ENCODE measurements at regions of chr19 and their contacts with region 1.

Region 1: GRCh38 chr19:58400916-58401839 is 5.7 kb downstream of the RNF225 start:
- DNase-seq: peak; percentile 98 to 100
- ATAC-seq: peak; percentile 94 to 98 (median 96)
- H3K4me3 ChIP-seq: peak overlapping the region; percentile 76
- H3K4me3 Mint-ChIP-seq: peak overlapping the region; percentile 92
- H3K27ac ChIP-seq: peak overlapping the region; percentile 98
- H3K27ac Mint-ChIP-seq: peak overlapping the region; percentile 92 to 93
- H3K4me1 ChIP-seq: peaks cover 18% of the 10 kb centered on the region
- H3K4me1 Mint-ChIP-seq: peaks cover 14 to 15% of the 10 kb centered on the region in 2 donors
- H3K27me3 ChIP-seq: peaks cover 10% of the 10 kb centered on the region
- H3K27me3 Mint-ChIP-seq: peaks cover 0 to 19% of the 10 kb centered on the region in 2 donors
- CTCF ChIP-seq: no peak

Region 2: DNA sequence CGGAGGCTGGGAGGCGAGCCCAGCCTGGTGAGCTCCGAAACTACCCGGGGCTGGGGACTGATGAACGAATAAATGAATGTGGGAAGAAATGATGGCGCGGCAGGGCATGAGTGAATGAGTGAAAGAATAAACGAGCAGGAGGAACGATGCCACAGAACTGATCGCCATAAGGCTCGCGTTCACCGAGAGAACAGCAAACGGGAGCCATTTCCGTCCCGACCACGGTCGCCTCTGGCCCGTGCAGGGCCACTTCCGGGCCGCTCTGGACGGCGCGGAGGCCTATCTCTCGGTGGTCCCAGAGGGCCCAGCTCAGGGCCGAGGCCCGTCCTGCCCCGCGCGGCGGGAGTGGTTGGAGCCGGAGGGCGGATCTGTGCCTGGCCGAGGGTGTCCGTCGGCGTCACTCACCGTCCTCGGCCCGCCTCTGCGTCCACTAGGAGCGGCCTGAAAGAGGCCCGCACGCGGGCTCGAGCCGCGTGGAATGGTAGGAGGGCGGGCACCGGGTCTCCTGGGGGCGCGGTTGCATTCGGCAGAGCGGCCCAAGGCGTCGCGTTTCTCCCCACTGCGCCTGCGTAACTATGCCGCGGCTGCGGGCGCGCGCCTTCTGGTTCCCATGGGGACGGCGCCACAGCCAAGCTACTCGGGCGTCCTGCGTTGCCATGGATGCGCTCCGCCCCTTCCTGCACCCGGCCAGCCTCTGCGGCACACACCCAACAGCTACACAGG is 38.7 kb before region 1 on chr19 and contains the start of gene ZNF497:
- intact Hi-C with region 1: loop called (anchors 1 kb)
- DNase-seq: peak; percentile 96 to 99
- ATAC-seq: peak; percentile 82 to 92 (median 86)
- H3K4me3 ChIP-seq: peak within 1 kb of the TSS; percentile 59
- H3K4me3 Mint-ChIP-seq: peak within 1 kb of the TSS; percentile 97
- H3K27ac ChIP-seq: peak within 1 kb of the TSS; percentile 84
- H3K27ac Mint-ChIP-seq: peak within 1 kb of the TSS; percentile 91 to 95
- H3K4me1 ChIP-seq: peaks cover 18% of the 10 kb centered on the region
- H3K4me1 Mint-ChIP-seq: peaks cover 13 to 20% of the 10 kb centered on the region in 2 donors
- H3K27me3 ChIP-seq: no peaks in the 10 kb centered on the region
- H3K27me3 Mint-ChIP-seq: no peaks in the 10 kb centered on the region
- CTCF ChIP-seq: no peak
- total RNA-seq, gene ZNF497: 0.40 to 0.61 (median 0.60) TPM

Region 3: DNA sequence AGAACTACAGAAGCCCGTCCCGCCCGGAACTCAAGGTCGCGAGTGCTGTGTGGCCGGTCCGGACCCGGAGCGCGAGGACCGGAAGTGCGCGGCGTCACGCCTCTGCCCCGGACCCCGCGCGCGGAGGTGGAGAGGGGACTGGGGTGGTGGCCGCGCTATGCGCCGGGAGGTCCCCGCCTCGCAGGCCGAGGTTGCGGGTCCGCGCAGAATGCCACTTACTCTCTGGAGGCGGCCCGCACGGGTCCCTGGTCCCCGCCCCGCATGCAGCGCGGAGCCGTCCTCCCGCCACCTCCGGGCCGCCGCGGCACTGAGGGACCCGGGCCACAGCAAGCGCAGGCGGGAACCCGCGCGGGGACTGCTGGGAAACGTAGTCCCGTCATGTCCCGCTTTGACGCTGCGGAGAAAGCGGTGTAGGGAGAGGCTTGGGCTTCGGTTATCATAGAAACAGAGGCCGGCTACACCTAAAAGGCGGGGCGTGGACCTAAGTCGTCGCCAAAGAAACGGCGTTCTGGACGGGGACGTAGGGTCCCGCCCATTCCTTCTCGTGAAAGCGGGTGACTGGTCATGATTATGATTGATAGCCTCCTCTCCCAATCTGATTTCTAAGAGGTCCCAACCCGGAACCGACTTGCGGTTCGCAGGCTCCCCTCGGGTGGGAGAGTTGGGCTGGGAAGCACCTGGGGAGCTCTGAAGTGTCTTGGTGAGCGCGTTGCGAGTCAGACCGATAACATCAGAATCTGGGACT is 20.3 kb before region 1 on chr19 and contains the start of gene ZNF837:
- intact Hi-C with region 1: loop called (anchors 1 kb)
- DNase-seq: peak; percentile 95 to 100
- ATAC-seq: peak; percentile 85 to 94 (median 86)
- H3K4me3 ChIP-seq: peak within 1 kb of the TSS; percentile 50
- H3K4me3 Mint-ChIP-seq: peak within 1 kb of the TSS; percentile 89
- H3K27ac ChIP-seq: peak within 1 kb of the TSS; percentile 92
- H3K27ac Mint-ChIP-seq: peak within 1 kb of the TSS; percentile 93 to 94
- H3K4me1 ChIP-seq: peaks cover 37% of the 10 kb centered on the region
- H3K4me1 Mint-ChIP-seq: peaks cover 13 to 29% of the 10 kb centered on the region in 2 donors
- H3K27me3 ChIP-seq: no peaks in the 10 kb centered on the region
- H3K27me3 Mint-ChIP-seq: no peaks in the 10 kb centered on the region
- CTCF ChIP-seq: no peak
- total RNA-seq, gene ZNF837: 0.63 to 1.4 (median 1.3) TPM

Region 4: DNA sequence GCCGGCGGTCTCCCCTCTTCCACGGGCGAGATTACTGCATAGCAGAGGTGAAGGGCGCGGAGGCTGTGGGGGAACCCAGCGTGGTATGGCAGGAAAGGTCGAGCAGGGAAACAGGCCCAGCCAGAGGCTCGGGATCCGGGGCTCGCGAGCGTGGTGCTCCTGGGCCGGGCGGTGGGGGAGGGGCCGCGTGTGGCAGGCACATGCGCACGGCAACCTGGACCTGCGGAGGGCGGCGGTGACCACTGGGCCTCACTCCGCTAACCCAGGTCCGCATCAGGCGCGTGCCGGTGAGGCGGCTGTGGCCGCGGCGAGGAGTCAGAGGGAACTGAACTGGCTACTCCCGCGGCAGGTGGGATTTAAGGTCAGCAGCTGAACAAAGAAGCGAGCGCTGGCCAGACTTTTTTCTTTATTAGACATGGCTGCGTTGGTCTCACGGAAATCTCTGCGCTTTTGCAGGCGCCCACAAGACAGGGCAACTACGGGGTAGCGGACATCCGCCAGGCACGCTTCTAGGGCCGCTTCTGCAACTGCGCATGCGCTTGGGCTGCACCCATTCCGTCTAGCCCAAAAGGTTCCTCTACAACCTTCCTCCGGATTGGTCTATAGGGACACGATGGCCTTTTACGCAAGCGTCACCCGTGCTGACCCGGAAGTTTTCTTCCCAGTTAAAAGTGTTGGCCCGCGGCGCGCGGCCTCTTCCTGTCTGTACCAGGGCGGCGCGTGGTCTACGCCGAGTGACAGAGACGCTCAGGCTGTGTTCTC is 14.4 kb before region 1 on chr19 and contains the start of gene RPS5:
- intact Hi-C with region 1: loop called (anchors 1 kb)
- DNase-seq: peak; percentile 89 to 100
- ATAC-seq: peak; percentile 85 to 96 (median 90)
- H3K4me3 ChIP-seq: peak within 1 kb of the TSS; percentile 55
- H3K4me3 Mint-ChIP-seq: peak within 1 kb of the TSS; percentile 97
- H3K27ac ChIP-seq: peak within 1 kb of the TSS; percentile 96
- H3K27ac Mint-ChIP-seq: peak within 1 kb of the TSS; percentile 98
- H3K4me1 ChIP-seq: peaks cover 36% of the 10 kb centered on the region
- H3K4me1 Mint-ChIP-seq: peaks cover 19 to 42% of the 10 kb centered on the region in 2 donors
- H3K27me3 ChIP-seq: no peaks in the 10 kb centered on the region
- H3K27me3 Mint-ChIP-seq: no peaks in the 10 kb centered on the region
- CTCF ChIP-seq: no peak
- total RNA-seq, gene RPS5: 406 to 580 (median 525) TPM